ENCODE measurements at regions of chr6 and their contacts with region 1.

Region 1: DNA sequence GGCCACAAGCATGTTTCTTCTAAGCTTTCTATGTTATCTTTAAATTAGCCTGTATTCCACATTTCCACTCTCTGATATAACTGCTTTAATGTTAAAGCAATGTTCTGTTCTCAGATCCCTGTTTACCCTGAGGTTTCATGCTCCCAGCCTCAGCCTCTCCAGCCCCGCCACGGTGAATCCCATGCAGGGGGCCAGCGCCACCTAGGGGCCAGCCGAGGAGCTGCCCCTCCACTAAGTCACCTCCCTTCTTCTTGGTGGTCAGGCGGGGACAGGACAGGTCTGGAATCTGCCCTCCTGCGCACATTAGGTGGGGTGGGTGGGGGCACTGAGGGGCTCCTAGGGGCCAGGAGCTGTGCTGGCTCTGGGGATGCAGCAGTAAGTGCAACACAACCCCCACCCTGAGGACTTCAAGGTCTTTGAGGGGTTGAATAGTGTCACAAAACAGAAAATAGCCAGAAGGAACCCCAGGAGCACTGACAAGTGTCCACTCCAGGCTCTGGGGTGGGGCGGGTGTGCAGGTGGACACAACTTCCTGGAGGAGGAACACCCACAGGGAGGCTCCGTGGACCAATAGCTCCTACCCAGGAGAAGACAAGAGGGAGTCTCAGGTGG is 61.6 kb downstream of the RAB44 start:
- DNase-seq: peak; percentile 84
- H3K4me3 ChIP-seq: peak overlapping the region; percentile 23
- H3K27ac ChIP-seq: peak overlapping the region; percentile 92
- H3K4me1 ChIP-seq: peaks cover 47% of the 10 kb centered on the region
- CTCF ChIP-seq: peak; percentile 99

Region 2: GRCh38 chr6:36114798-36115408 is 644.4 kb before region 1 on chr6:
- CTCF ChIA-PET with region 1: no interaction called
- POLR2A ChIA-PET with region 1: interaction called, 12 read pairs
- intact Hi-C with region 1: no loop called
- DNase-seq: peak; percentile 84
- H3K4me3 ChIP-seq: peak overlapping the region; percentile 31
- H3K27ac ChIP-seq: peak overlapping the region; percentile 89
- H3K4me1 ChIP-seq: peaks cover 77% of the 10 kb centered on the region
- CTCF ChIP-seq: no peak

Region 3: DNA sequence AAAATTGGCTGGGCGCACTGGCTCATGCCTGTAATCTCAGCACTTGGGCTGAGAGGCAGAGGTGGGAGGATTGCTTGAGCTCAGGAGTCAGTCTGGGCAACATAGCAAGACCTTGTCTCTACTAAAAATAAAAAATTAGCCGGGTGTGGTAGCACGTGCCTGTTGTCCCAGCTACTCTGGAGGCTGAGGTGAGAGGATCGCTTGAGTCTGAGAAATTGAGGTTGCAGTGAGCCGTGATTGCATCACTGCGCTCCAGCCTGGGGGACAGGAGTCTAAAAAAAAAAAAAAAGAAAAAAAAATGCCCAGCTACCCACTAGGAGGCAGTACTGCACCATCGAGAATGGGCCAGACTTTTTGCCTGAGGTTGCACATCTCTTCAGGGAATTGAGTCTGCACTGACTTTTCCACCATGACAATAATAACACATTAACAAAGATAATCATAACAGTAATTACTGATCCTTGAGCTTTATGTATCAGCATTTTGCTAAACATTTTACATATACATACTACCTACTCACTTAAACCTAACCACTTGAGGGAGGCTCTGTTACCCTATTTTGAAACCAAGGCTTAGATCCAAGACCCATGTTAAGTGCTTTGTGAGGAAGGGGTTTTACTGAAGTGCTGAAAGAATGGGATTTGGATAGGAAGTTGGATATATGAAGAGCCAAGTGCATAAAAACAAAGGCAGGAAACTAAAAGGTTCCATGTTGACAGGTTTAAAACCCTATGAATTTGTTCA is 144.1 kb before region 1 on chr6:
- CTCF ChIA-PET with region 1: interaction called, 4 read pairs
- POLR2A ChIA-PET with region 1: interaction called, 6 read pairs
- intact Hi-C with region 1: loop called (anchors 2 kb)
- DNase-seq: peak; percentile 78
- H3K4me3 ChIP-seq: no peak overlapping the region
- H3K27ac ChIP-seq: no peak overlapping the region
- H3K4me1 ChIP-seq: peaks cover 14% of the 10 kb centered on the region
- CTCF ChIP-seq: peak; percentile 91

Region 4: DNA sequence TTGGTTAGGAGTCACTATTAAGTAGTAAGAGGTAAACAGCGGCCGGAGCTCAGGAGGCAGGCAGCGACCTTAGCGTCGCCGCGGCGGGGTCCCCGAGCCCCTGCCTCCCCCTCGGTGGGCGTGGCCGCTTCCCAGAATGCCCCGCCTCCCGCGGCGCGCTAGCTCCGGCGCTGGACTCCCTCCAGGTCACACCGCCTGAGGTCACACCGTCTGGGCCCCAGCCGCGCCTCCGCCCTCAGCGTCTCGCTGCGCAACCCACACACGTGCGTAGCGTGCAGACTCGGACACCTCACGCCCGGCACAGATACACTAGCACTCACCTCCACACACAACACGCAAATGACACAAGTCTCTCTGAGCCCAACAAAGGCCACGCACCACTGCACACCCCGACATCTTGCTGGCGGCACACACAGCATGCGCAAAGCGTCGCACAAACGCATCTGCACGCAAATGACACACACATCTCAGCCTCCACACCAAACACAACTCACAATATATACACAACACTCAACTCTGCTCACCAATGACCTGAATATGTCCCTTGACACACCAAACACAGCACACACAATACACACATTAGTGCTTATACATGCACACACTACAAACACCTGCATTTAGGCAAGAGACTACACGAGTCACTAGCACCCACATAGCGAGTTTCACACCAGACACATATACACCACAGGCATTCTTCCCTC is 98.3 kb before region 1 on chr6:
- CTCF ChIA-PET with region 1: interaction called, 4 read pairs
- POLR2A ChIA-PET with region 1: no interaction called
- intact Hi-C with region 1: loop called (anchors 5 kb)
- DNase-seq: no peak
- H3K4me3 ChIP-seq: no peak overlapping the region
- H3K27ac ChIP-seq: no peak overlapping the region
- H3K4me1 ChIP-seq: peaks cover 91% of the 10 kb centered on the region
- CTCF ChIP-seq: no peak

Region 5: GRCh38 chr6:36701401-36701991 is 57.8 kb before region 1 on chr6:
- CTCF ChIA-PET with region 1: interaction called, 4 read pairs
- POLR2A ChIA-PET with region 1: interaction called, 5 read pairs
- intact Hi-C with region 1: loop called (anchors 1 kb)
- DNase-seq: peak; percentile 69
- H3K4me3 ChIP-seq: no peak overlapping the region
- H3K27ac ChIP-seq: no peak overlapping the region
- H3K4me1 ChIP-seq: peaks cover 5% of the 10 kb centered on the region
- CTCF ChIP-seq: peak; percentile 89

Region 6: GRCh38 chr6:36780442-36781177 is 21.4 kb after region 1 on chr6:
- CTCF ChIA-PET with region 1: interaction called, 13 read pairs
- POLR2A ChIA-PET with region 1: interaction called, 3 read pairs
- intact Hi-C with region 1: no loop called
- DNase-seq: peak; percentile 26
- H3K4me3 ChIP-seq: no peak overlapping the region
- H3K27ac ChIP-seq: no peak overlapping the region
- H3K4me1 ChIP-seq: peaks cover 21% of the 10 kb centered on the region
- CTCF ChIP-seq: no peak

Region 7: DNA sequence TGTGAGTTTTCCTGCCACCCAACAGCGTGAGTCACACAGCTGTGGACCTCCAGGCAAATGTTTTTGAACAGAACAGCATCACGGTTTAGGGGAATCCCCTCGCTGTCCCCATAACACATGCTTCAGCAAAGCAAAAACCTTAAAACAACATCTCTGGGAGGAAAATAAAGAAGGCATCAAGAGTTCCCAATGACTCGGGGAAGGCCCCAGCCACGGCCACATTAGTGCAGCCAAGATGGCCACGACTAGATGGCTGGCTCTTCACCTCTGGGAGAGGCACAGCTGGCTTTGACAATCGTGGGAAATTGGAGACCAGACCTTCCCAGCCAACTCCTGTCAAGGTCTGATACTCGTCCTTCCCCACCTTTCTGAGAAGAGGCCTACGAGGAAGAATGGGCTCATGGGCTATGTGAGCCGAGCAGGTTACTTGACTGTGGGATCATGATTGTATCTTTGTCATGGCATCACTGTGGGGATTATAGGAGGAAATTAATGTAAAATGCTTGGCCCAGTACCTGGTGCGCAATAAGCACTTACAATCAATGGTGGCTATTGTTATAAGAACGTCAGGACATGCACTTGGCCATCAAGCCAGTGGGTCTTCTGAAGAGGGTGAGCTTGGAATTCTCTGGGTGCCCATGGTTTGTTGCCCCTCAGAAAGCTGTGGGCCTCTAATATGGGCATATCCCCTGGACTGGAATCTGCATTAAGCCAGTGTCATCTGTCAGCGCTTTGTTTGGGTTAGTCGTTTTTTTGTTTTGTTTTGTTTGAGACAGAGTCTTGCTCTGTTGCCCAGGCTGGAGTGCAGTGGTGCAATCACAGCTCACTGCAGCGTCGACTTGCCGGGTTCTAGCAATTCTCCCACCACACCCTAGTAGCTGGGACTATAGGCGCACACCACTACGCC is 289.9 kb after region 1 on chr6:
- CTCF ChIA-PET with region 1: no interaction called
- POLR2A ChIA-PET with region 1: no interaction called
- intact Hi-C with region 1: no loop called
- DNase-seq: peak; percentile 69
- H3K4me3 ChIP-seq: no peak overlapping the region
- H3K27ac ChIP-seq: peak overlapping the region; percentile 29
- H3K4me1 ChIP-seq: peaks cover 41% of the 10 kb centered on the region
- CTCF ChIP-seq: no peak

Measured in OCI-LY7 (cell line).